CD8-positive, alpha-beta T cell (primary cell): ENCODE measurements at regions of chr4 and their contacts with region 1.

Region 1: GRCh38 chr4:145732895-145733880 is 53.2 kb downstream of the C4orf51 start:
- DNase-seq: peak; percentile 58 to 92 (median 83)
- ATAC-seq: peak; percentile 98
- H3K4me3 ChIP-seq: peak overlapping the region; percentile 71 to 73
- H3K4me3 Mint-ChIP-seq: peak overlapping the region; percentile 80
- H3K27ac ChIP-seq: peak overlapping the region in 1 of 2 experiments; percentile 45
- H3K27ac Mint-ChIP-seq: peak overlapping the region; percentile 29
- H3K4me1 ChIP-seq: peaks cover 3% of the 10 kb centered on the region
- H3K4me1 Mint-ChIP-seq: peaks cover 9% of the 10 kb centered on the region
- H3K27me3 ChIP-seq: no peaks in the 10 kb centered on the region
- H3K27me3 Mint-ChIP-seq: peaks cover 4% of the 10 kb centered on the region
- CTCF ChIP-seq: no peak

Region 2: GRCh38 chr4:144787365-144788258 is 945.6 kb before region 1 on chr4:
- CTCF ChIA-PET with region 1: no interaction called
- POLR2A ChIA-PET with region 1: no interaction called
- intact Hi-C with region 1: no loop called
- DNase-seq: peak in 1 of 9 experiments; percentile 14
- ATAC-seq: no peak
- H3K4me3 ChIP-seq: no peak overlapping the region
- H3K4me3 Mint-ChIP-seq: no peak overlapping the region
- H3K27ac ChIP-seq: no peak overlapping the region
- H3K27ac Mint-ChIP-seq: no peak overlapping the region
- H3K4me1 ChIP-seq: no peaks in the 10 kb centered on the region
- H3K4me1 Mint-ChIP-seq: no peaks in the 10 kb centered on the region
- H3K27me3 ChIP-seq: no peaks in the 10 kb centered on the region
- H3K27me3 Mint-ChIP-seq: no peaks in the 10 kb centered on the region
- CTCF ChIP-seq: no peak

Region 3: GRCh38 chr4:145097821-145098674 is 635.1 kb before region 1 on chr4 and contains the starts of genes ABCE1 and ANAPC10:
- CTCF ChIA-PET with region 1: no interaction called
- POLR2A ChIA-PET with region 1: no interaction called
- intact Hi-C with region 1: loop called (anchors 1 to 10 kb)
- DNase-seq: peak; percentile 84 to 99 (median 97)
- ATAC-seq: peak; percentile 89
- H3K4me3 ChIP-seq: peak within 1 kb of the TSS; percentile 70 to 81
- H3K4me3 Mint-ChIP-seq: peak within 1 kb of the TSS; percentile 95
- H3K27ac ChIP-seq: peak within 1 kb of the TSS; percentile 88 to 91
- H3K27ac Mint-ChIP-seq: peak within 1 kb of the TSS; percentile 98
- H3K4me1 ChIP-seq: peaks cover 41% of the 10 kb centered on the region
- H3K4me1 Mint-ChIP-seq: peaks cover 46% of the 10 kb centered on the region
- H3K27me3 ChIP-seq: no peaks in the 10 kb centered on the region
- H3K27me3 Mint-ChIP-seq: no peaks in the 10 kb centered on the region
- CTCF ChIP-seq: no peak
- total RNA-seq, gene ABCE1: 68.8 to 70.9 TPM
- total RNA-seq, gene ANAPC10: 24.5 to 26.7 TPM